Sigmoid colon (tissue), 7 donors: ENCODE measurements at regions of chr12 and their contacts with region 1.

Region 1: DNA sequence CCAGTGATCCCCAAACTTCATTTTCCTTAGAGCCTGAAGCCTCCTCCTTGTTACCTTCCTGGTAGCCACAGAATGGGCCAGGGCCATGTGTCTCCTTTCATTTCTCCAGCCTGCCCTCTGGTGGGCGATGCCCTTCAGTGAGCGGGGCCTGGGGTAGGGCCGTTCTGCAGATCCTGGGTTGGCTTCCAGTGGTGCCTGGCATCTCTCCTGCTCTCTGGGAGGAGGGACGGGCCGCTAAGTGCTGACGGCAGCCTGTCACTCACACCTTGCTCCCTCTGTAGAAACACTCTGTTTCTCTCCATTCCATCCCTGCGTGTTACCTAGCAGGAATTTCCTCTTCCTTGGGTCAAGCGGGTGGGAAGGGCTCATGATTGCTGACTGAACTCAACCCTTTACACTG is 232.1 kb downstream of the CACNA1C start:
- DNase-seq: peak; percentile 84
- H3K4me3 ChIP-seq: no peak overlapping the region
- H3K27ac ChIP-seq: peak overlapping the region; percentile 77 to 89 (median 84)
- H3K4me1 ChIP-seq: peaks cover 0 to 84% (median 81%) of the 10 kb centered on the region in 4 donors
- H3K27me3 ChIP-seq: no peaks in the 10 kb centered on the region
- CTCF ChIP-seq: peak; percentile 38 to 68 (median 58)
- EP300 ChIP-seq: no peak
- POLR2A ChIP-seq: no peak

Region 2: GRCh38 chr12:2179953-2180736 is 104.7 kb before region 1 on chr12:
- intact Hi-C with region 1: loop called (anchors 5 kb)
- DNase-seq: peak; percentile 94
- H3K4me3 ChIP-seq: no peak overlapping the region
- H3K27ac ChIP-seq: peak overlapping the region; percentile 79 to 86 (median 82)
- H3K4me1 ChIP-seq: peaks cover 0 to 87% (median 81%) of the 10 kb centered on the region in 4 donors
- H3K27me3 ChIP-seq: no peaks in the 10 kb centered on the region
- CTCF ChIP-seq: no peak
- EP300 ChIP-seq: peak in 2 of 4 donors; percentile 29 to 92
- POLR2A ChIP-seq: no peak

Region 3: GRCh38 chr12:2526371-2526770 is 241.5 kb after region 1 on chr12:
- intact Hi-C with region 1: no loop called
- DNase-seq: no peak
- H3K4me3 ChIP-seq: no peak overlapping the region
- H3K27ac ChIP-seq: no peak overlapping the region
- H3K4me1 ChIP-seq: no peaks in the 10 kb centered on the region
- H3K27me3 ChIP-seq: no peaks in the 10 kb centered on the region
- CTCF ChIP-seq: no peak
- EP300 ChIP-seq: no peak
- POLR2A ChIP-seq: no peak